Psoas muscle (tissue), 8 donors: ENCODE measurements at regions of chr5 and their contacts with region 1.

Region 1: GRCh38 chr5:157328277-157328912 is 62.5 kb downstream of the CYFIP2 start:
- DNase-seq: peak; percentile 35 to 69
- ATAC-seq: peak; percentile 90 to 99 (median 95)
- H3K4me3 ChIP-seq: peak overlapping the region; percentile 3
- H3K27ac ChIP-seq: no peak overlapping the region
- H3K4me1 ChIP-seq: no peaks in the 10 kb centered on the region
- H3K27me3 ChIP-seq: no peaks in the 10 kb centered on the region
- CTCF ChIP-seq: peak; percentile 90

Region 2: GRCh38 chr5:157431544-157432200 is 103.3 kb after region 1 on chr5:
- intact Hi-C with region 1: loop called in 1 of 2 experiments (anchors 5 kb)
- DNase-seq: no peak
- ATAC-seq: peak; percentile 61 to 90 (median 78)
- H3K4me3 ChIP-seq: no peak overlapping the region
- H3K27ac ChIP-seq: no peak overlapping the region
- H3K4me1 ChIP-seq: no peaks in the 10 kb centered on the region
- H3K27me3 ChIP-seq: no peaks in the 10 kb centered on the region
- CTCF ChIP-seq: peak; percentile 62

Region 3: DNA sequence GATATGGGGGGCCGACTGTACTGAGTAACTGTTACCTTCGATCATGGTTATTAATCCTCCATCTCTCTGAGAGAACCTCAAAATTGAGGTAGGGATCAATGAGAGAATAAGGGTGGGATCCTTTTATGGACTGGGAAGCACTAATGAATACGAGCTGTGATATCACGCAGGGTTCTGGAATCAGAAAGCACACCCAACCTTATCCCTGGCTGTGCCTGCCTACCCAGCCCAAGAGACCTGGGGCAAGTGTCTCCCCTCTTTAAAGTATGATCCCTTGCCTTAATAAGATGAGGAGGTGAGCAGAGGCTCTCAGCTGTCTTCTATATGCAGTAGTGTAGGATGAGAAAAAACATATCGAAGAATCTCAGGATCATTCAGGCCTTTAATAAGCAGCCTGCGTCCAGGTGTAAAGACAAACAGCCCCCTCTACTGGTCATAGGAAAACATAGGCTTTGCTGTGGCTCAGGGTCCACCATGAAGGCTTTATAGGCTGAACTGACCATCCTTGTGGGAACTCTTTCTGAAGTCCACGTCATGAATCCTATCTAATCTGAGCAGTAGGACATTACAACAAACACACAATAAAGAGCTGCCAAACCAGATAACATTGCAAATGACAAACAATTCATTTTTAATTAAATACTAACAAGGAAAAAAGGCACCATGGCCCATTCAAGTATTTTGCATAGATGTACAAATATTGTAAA is 148.5 kb after region 1 on chr5:
- intact Hi-C with region 1: loop called (anchors 2 kb)
- DNase-seq: no peak
- ATAC-seq: peak; percentile 72 to 88 (median 79)
- H3K4me3 ChIP-seq: no peak overlapping the region
- H3K27ac ChIP-seq: no peak overlapping the region
- H3K4me1 ChIP-seq: no peaks in the 10 kb centered on the region
- H3K27me3 ChIP-seq: no peaks in the 10 kb centered on the region
- CTCF ChIP-seq: peak; percentile 79

Region 4: DNA sequence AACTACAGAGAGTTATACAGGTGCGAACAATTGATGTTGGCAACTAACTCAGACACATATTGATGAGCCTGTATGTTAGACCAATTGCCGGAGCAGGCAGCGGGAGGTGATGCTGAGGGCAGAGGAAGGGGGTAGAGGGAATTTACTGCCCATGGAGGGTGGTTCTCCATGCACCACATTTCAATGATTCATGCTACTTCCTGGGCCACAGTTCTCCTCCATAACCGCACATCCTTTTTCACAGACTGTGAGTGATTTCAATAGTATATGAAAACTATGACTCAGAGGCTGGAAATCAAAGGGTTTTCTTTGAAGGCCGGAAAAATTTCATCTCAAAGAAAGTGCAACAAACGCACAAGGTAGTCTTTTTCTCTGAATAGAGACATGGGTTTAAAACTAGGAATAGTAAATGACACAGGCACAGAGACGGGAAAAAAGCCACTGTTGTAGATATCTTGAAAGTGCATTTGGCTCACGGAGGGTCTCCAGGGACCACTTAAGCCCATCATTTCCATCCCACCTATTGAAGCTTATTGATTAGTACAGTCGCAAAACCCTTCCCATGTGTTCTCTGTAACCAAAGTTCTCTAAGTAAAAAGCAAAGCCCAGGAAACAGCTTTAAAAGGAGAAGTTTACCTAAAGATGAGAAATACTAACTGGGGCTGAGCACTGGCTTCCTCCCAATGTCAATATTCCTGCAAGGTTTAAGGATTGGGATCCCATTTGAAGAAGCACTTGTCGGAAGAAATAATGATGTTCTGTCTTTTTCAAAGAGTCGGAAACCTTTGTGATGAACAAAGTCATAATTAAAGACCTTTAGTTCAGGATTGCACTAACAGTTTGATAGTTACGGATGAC is 275.2 kb after region 1 on chr5:
- intact Hi-C with region 1: no loop called
- DNase-seq: no peak
- ATAC-seq: no peak
- H3K4me3 ChIP-seq: no peak overlapping the region
- H3K27ac ChIP-seq: no peak overlapping the region
- H3K4me1 ChIP-seq: no peaks in the 10 kb centered on the region
- H3K27me3 ChIP-seq: no peaks in the 10 kb centered on the region
- CTCF ChIP-seq: no peak

Region 5: DNA sequence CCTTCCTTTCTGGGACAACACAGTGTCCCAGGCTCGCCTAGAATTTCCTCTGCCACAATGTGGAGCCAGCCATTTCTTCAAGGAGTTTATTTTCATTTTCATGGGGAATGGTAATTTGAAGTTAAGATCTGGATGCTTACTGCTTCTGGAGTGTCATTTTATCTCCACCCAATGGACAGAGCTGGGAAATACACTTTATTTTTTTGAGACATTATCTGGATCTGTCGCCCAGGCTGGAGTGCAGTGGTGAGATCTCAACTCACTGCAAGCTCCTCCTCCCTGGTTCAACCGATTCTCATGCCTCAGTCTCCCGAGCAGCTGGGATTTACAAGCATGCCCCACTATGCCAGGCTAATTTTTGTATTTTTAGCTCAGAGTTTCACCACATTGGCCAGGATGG is 390.1 kb after region 1 on chr5:
- intact Hi-C with region 1: loop called in 1 of 2 experiments (anchors 1 kb)
- DNase-seq: no peak
- ATAC-seq: peak; percentile 76 to 95 (median 81)
- H3K4me3 ChIP-seq: no peak overlapping the region
- H3K27ac ChIP-seq: no peak overlapping the region
- H3K4me1 ChIP-seq: peaks cover 3% of the 10 kb centered on the region
- H3K27me3 ChIP-seq: no peaks in the 10 kb centered on the region
- CTCF ChIP-seq: peak; percentile 66

Region 6: DNA sequence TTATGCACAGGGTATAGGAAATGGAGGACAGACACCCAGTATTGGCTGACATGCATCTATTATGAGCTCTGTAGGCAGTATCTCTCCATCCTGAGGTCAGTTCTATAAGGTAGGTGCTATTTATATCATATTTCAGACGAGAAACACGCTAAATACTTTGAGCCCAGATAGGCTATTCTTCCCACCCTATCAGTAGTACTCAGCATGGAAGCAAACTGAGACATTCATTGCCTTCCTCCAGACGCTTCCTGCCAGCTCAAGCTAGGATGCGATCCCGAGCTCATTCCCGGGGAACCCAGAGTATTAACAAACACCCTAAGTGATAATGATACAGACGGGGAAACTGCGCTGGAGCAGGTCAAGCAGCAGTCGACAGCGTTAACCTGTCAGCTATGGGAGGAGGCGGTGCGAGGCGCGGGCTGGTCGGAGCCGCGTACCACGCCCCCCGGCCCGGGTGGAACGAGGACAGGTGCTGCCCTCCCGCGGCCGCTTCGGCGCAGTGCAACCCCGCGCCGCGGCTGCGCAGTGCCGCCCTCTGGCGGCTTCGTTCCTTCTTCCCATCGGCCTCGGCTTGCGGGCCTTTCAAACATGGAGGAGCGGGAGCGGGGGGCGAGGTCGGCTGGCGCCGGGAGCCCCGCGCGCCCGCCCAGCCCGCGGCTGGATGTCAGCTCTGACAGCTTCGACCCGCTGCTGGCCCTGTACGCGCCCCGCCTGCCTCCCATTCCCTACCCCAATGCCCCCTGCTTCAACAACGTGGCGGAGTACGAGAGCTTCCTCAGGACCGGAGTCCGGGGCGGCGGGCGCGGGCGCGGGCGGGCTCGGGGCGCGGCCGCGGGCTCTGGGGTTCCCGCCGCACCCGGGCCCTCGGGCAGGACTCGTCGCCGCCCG is 415.0 kb after region 1 on chr5 and contains the start of gene LSM11:
- intact Hi-C with region 1: loop called in 1 of 2 experiments (anchors 2 kb)
- DNase-seq: peak; percentile 89 to 92
- ATAC-seq: peak; percentile 98 to 99 (median 99)
- H3K4me3 ChIP-seq: peak within 1 kb of the TSS; percentile 88
- H3K27ac ChIP-seq: no peak within 1 kb of the TSS
- H3K4me1 ChIP-seq: peaks cover 17% of the 10 kb centered on the region
- H3K27me3 ChIP-seq: no peaks in the 10 kb centered on the region
- CTCF ChIP-seq: peak; percentile 99
- total RNA-seq, gene LSM11: 1.0 to 1.9 (median 1.8) TPM